ENCODE measurements at regions of chr13 and their contacts with region 1.

Region 1: GRCh38 chr13:20160847-20161274 is at the start of gene GJA3:
- DNase-seq: no peak
- H3K4me3 ChIP-seq: peak within 1 kb of the TSS; percentile 34 to 63
- H3K27ac ChIP-seq: no peak within 1 kb of the TSS
- H3K4me1 ChIP-seq: peaks cover 3 to 4% of the 10 kb centered on the region in 2 donors
- H3K27me3 ChIP-seq: peaks cover 33% of the 10 kb centered on the region
- CTCF ChIP-seq: no peak
- total RNA-seq, gene GJA3: not detected

Region 2: GRCh38 chr13:19631491-19631890 is 529.4 kb before region 1 on chr13:
- intact Hi-C with region 1: no loop called
- DNase-seq: no peak
- H3K4me3 ChIP-seq: no peak overlapping the region
- H3K27ac ChIP-seq: no peak overlapping the region
- H3K4me1 ChIP-seq: peaks cover 5 to 16% of the 10 kb centered on the region in 2 donors
- H3K27me3 ChIP-seq: no peaks in the 10 kb centered on the region
- CTCF ChIP-seq: no peak

Region 3: GRCh38 chr13:19927117-19927748 is 233.6 kb before region 1 on chr13:
- intact Hi-C with region 1: loop called (anchors 2 kb)
- DNase-seq: no peak
- H3K4me3 ChIP-seq: no peak overlapping the region
- H3K27ac ChIP-seq: no peak overlapping the region
- H3K4me1 ChIP-seq: no peaks in the 10 kb centered on the region
- H3K27me3 ChIP-seq: no peaks in the 10 kb centered on the region
- CTCF ChIP-seq: peak; percentile 15 to 42 (median 26)

Region 4: DNA sequence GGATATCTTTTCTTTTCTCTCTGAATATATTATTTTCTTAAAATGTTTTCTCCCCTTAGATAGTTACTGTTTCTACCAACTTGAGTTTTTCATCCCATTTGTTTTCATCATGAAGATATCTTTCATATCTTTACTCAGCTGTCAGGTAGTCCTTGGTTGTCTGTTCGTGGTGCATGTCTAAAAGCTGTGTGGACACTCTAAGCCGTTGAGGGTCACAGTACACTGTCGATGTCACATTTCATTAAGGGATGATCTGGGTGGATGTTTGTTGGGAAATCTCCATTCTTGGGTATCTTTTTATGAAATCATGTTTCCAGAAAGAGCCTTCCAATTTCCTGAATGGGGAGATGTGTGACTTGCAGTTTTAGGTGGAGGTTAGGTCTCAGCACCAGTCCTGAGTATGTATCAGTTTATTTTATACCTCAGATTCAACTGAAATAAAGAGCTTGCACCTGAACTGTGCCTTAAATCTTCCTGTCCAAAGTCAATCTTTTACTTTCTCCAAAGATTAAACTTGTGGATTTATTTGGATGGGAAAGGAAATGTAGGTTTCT is 179.1 kb before region 1 on chr13:
- intact Hi-C with region 1: loop called (anchors 2 kb)
- DNase-seq: no peak
- H3K4me3 ChIP-seq: no peak overlapping the region
- H3K27ac ChIP-seq: no peak overlapping the region
- H3K4me1 ChIP-seq: no peaks in the 10 kb centered on the region
- H3K27me3 ChIP-seq: no peaks in the 10 kb centered on the region
- CTCF ChIP-seq: no peak

Region 5: DNA sequence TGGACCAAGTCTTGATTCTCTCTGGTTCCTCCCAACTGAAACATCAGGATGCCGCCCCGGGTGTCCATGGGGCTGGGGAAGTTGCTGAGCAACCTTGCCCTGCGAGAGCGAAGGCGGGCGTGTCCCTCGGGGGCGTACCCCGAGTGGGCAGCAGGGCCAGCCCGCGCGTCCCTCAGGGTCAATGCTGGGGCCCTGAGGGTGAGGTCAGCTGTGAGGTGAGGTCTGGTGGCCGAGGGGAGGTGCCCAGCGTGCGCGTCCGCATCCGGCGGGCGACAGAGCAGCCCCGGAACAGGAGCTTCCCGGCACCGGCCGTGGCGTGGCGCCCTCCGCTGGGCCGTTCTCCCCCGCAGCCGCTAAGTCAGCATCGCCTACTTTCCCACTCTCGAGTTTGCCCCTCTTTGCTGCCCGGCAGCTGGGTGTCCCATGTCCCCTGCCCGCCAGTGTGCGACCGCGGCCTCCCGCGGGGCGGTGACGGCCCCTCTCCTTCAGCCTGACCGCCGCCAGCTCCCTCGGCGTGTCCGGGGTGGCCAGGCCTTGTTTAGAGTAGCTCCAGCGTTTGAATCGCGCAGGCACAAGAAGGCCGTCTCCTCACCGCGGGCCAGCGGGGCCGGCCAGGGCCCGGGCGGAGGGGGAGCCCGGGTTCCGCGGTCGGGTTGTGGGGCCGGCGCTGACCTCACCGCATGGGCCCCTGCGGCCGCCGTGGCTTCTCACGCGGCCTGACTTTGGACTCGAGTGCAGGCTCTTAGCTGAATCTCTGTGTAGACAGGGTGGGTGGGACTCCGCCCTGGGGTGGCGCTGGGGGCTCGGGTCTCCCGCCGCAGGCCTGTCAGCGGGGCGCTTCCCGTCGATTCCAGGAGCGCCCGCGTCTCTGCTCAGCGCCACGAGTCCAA is 33.0 kb before region 1 on chr13:
- intact Hi-C with region 1: loop called (anchors 2 kb)
- DNase-seq: peak in 1 of 2 donors; percentile 83
- H3K4me3 ChIP-seq: peak overlapping the region; percentile 83 to 84
- H3K27ac ChIP-seq: peak overlapping the region; percentile 90
- H3K4me1 ChIP-seq: peaks cover 0 to 13% of the 10 kb centered on the region in 2 donors
- H3K27me3 ChIP-seq: no peaks in the 10 kb centered on the region
- CTCF ChIP-seq: peak in 2 of 3 experiments; percentile 32 to 54